Activated CD8-positive, alpha-beta T cell treated with anti-CD3 and anti-CD28 coated beads for 36 hours (primary cell): ENCODE measurements at regions of chr6 and their contacts with region 1.

Region 1: GRCh38 chr6:44265007-44265721 is at the start of gene NFKBIE:
- DNase-seq: peak; percentile 96
- ATAC-seq: peak; percentile 70
- H3K4me3 Mint-ChIP-seq: peak within 1 kb of the TSS; percentile 95
- H3K27ac Mint-ChIP-seq: peak within 1 kb of the TSS; percentile 95
- H3K4me1 Mint-ChIP-seq: peaks cover 51% of the 10 kb centered on the region
- H3K27me3 Mint-ChIP-seq: peaks cover 16% of the 10 kb centered on the region
- CTCF ChIP-seq: peak; percentile 49
- total RNA-seq, gene NFKBIE: 13.3 to 17.9 TPM

Region 2: DNA sequence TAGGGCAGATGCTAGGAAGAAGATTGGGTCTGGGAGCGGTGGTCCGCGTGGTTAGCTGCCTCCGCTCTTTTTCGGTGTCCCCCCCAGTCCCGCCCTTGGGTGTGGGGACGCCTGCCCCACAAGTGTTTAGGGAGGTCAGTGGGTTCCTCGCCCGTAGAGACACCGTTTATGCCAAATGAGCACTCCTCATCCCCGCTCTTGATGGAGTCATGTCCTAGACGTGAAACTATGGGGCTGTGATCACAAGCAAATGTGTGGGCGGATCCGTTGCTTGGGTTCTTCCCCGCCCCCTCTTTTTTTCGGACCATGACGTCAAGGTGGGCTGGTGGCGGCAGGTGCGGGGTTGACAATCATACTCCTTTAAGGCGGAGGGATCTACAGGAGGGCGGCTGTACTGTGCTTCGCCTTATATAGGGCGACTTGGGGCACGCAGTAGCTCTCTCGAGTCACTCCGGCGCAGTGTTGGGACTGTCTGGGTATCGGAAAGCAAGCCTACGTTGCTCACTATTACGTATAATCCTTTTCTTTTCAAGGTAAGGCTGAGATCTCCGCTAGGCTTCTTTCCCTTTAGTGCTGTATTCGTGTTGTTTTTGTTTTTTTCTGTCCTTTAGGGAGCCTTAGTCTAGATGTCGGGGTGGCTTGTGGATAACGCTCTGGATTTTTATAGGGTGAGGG is 18.4 kb before region 1 on chr6 and contains the start of gene HSP90AB1:
- CTCF ChIA-PET with region 1: interaction called, 6 read pairs
- POLR2A ChIA-PET with region 1: interaction called, 486 read pairs
- intact Hi-C with region 1: no loop called
- DNase-seq: peak; percentile 99
- ATAC-seq: peak; percentile 85
- H3K4me3 Mint-ChIP-seq: peak within 1 kb of the TSS; percentile 100
- H3K27ac Mint-ChIP-seq: peak within 1 kb of the TSS; percentile 100
- H3K4me1 Mint-ChIP-seq: peaks cover 39% of the 10 kb centered on the region
- H3K27me3 Mint-ChIP-seq: peaks cover 3% of the 10 kb centered on the region
- CTCF ChIP-seq: no peak
- total RNA-seq, gene HSP90AB1: 2,124 to 2,130 TPM

Region 3: DNA sequence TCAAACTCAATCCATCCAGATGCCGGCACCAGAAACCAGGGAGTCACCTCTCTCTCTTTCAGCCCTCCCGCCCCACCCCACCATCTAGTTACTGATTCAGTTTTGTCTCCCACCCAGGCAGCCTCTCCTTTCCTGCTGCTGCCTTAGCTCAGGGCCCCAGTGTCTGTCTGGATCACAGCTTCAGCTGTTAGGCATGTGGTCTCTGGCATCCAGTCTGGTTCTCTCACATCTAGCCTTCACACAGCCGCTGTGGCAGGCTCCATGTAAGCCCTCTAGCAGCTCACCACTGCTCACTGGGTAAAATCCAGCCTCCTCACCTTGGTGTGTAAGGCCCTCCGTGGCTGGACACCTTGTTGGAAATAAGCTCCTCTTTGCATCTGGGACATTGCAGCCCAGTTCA is 26.7 kb after region 1 on chr6:
- CTCF ChIA-PET with region 1: interaction called, 19 read pairs
- POLR2A ChIA-PET with region 1: interaction called, 10 read pairs
- intact Hi-C with region 1: no loop called
- DNase-seq: no peak
- ATAC-seq: no peak
- H3K4me3 Mint-ChIP-seq: no peak overlapping the region
- H3K27ac Mint-ChIP-seq: no peak overlapping the region
- H3K4me1 Mint-ChIP-seq: peaks cover under 1% of the 10 kb centered on the region
- H3K27me3 Mint-ChIP-seq: peaks cover 62% of the 10 kb centered on the region
- CTCF ChIP-seq: no peak

Region 4: GRCh38 chr6:44304282-44305199 is 39.4 kb after region 1 on chr6:
- CTCF ChIA-PET with region 1: interaction called, 182 read pairs
- POLR2A ChIA-PET with region 1: interaction called, 5 read pairs
- intact Hi-C with region 1: loop called (anchors 2 kb)
- DNase-seq: peak; percentile 54
- ATAC-seq: peak; percentile 93
- H3K4me3 Mint-ChIP-seq: no peak overlapping the region
- H3K27ac Mint-ChIP-seq: no peak overlapping the region
- H3K4me1 Mint-ChIP-seq: no peaks in the 10 kb centered on the region
- H3K27me3 Mint-ChIP-seq: no peaks in the 10 kb centered on the region
- CTCF ChIP-seq: peak; percentile 79

Region 5: DNA sequence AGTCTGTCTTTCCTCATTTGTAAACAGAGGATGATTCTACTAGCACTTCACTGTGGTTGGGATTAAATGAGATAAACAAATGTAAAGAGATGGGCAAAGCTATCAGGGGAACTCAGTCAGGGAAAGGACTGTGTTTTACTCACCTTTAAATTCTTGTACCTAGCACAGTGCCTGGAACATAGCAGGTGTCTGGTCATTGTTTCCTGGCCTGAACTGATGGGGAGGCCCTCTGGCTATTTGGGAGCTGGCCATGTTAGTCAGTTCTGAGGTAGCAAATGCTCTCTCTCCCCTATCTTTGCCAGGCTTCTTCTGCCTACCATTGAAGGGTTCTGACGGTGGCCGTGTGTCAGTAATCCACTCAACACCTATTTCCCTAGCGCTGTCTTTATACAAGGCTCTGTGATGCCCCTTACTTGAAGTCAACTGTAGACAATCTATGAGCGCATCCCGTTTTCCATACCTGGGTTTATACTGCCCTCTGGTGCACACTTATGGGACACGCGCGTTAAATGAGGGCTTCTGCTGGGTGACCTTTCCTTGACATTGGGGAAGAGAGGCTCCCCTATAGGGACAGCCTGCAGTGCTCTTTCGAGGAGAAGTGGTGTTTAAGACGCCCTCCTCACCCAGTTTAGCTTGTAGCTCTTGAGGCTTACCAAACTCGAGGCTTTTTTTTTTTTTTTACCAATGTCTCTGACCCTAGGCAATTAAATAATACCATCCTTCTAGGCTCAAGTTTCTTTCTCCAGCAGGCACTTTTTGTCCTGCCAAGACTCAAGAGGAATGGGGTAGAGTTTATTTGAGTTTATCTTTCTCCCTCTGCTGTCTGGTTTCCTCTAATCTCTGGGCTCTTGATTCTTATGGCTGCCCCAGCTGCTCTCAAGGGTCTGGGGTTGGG is 73.3 kb after region 1 on chr6:
- CTCF ChIA-PET with region 1: interaction called, 165 read pairs
- POLR2A ChIA-PET with region 1: interaction called, 8 read pairs
- intact Hi-C with region 1: loop called (anchors 1 kb)
- DNase-seq: peak; percentile 83
- ATAC-seq: peak; percentile 89
- H3K4me3 Mint-ChIP-seq: no peak overlapping the region
- H3K27ac Mint-ChIP-seq: no peak overlapping the region
- H3K4me1 Mint-ChIP-seq: no peaks in the 10 kb centered on the region
- H3K27me3 Mint-ChIP-seq: peaks cover 19% of the 10 kb centered on the region
- CTCF ChIP-seq: peak; percentile 74

Region 6: GRCh38 chr6:44645276-44645675 is 380.1 kb after region 1 on chr6:
- CTCF ChIA-PET with region 1: no interaction called
- POLR2A ChIA-PET with region 1: no interaction called
- intact Hi-C with region 1: no loop called
- DNase-seq: peak; percentile 13
- ATAC-seq: no peak
- H3K4me3 Mint-ChIP-seq: no peak overlapping the region
- H3K27ac Mint-ChIP-seq: no peak overlapping the region
- H3K4me1 Mint-ChIP-seq: peaks cover 32% of the 10 kb centered on the region
- H3K27me3 Mint-ChIP-seq: peaks cover 3% of the 10 kb centered on the region
- CTCF ChIP-seq: no peak